ENCODE measurements at regions of chr5 and their contacts with region 1.

Region 1: DNA sequence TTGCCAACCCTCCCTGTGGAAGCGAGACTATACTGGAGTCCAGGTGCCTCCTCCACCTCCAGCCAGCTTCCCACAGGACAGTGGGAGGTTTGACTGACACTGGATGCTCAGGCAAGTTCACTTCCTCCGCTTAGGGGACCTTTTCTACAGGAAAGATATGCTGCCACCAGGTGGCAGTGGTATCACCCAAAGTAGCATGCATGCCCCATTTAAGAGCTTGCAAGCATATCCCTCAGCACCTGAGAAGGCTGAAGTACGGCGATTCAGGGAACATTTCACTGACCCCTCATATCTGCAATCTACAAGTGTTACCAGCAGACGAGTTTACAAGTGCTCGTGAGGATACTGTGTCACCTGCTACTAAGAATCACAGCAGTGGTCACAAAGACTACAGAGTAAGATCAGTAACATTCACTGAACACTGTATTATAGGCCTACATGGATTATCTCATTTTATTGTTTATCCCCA is 75.5 kb downstream of the KLHL3 start:
- DNase-seq: peak; percentile 82
- H3K4me3 Mint-ChIP-seq: no peak overlapping the region
- H3K27ac Mint-ChIP-seq: no peak overlapping the region
- H3K4me1 Mint-ChIP-seq: peaks cover 8% of the 10 kb centered on the region
- H3K27me3 Mint-ChIP-seq: no peaks in the 10 kb centered on the region

Region 2: DNA sequence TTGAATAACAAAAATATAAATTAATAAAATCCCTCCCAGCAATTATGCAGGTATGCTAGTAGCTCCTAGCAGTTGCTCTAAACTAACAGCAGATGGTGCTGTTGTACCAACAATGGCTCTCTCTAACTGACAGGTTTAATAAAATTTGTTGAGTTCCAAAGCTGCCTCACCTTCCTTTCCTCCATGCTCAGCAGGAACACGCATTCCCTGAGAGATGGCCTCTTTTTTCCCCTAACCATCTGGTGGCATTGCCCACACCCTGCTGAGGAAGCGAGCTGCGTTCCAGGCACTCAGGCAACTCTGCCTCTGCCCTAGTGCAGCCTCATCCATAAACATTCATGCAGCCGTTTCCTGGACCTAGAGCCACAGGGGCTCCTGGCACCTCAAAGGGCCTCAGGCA is 30.7 kb before region 1 on chr5:
- CTCF ChIA-PET with region 1: interaction called, 36 read pairs
- POLR2A ChIA-PET with region 1: no interaction called
- intact Hi-C with region 1: no loop called
- DNase-seq: no peak
- H3K4me3 Mint-ChIP-seq: no peak overlapping the region
- H3K27ac Mint-ChIP-seq: no peak overlapping the region
- H3K4me1 Mint-ChIP-seq: no peaks in the 10 kb centered on the region
- H3K27me3 Mint-ChIP-seq: no peaks in the 10 kb centered on the region

Region 3: DNA sequence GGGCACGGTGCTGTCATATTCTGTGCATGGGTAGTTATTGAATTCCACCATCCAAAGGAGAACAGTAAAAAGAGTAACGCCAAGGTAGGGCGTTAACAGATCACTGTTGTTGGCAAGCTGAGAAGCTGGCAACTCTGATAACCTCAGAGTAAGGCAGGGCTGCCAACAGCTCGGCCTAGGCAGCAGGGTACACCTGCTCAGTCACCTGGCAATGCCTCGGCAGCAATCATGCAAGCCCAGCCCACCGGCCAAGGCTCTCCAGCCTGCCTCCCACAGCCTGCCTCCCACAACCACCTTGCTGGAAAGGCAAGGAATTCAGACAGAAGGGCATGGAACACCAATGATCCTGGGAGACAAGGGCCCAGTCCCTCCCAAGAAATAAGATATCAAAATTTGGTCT is 11.6 kb after region 1 on chr5:
- CTCF ChIA-PET with region 1: interaction called, 47 read pairs
- POLR2A ChIA-PET with region 1: interaction called, 3 read pairs
- intact Hi-C with region 1: no loop called
- DNase-seq: no peak
- H3K4me3 Mint-ChIP-seq: no peak overlapping the region
- H3K27ac Mint-ChIP-seq: no peak overlapping the region
- H3K4me1 Mint-ChIP-seq: no peaks in the 10 kb centered on the region
- H3K27me3 Mint-ChIP-seq: no peaks in the 10 kb centered on the region

Region 4: GRCh38 chr5:137714946-137715345 is 54.6 kb after region 1 on chr5:
- CTCF ChIA-PET with region 1: interaction called, 13 read pairs
- POLR2A ChIA-PET with region 1: no interaction called
- intact Hi-C with region 1: no loop called
- DNase-seq: no peak
- H3K4me3 Mint-ChIP-seq: no peak overlapping the region
- H3K27ac Mint-ChIP-seq: no peak overlapping the region
- H3K4me1 Mint-ChIP-seq: no peaks in the 10 kb centered on the region
- H3K27me3 Mint-ChIP-seq: no peaks in the 10 kb centered on the region

Region 5: DNA sequence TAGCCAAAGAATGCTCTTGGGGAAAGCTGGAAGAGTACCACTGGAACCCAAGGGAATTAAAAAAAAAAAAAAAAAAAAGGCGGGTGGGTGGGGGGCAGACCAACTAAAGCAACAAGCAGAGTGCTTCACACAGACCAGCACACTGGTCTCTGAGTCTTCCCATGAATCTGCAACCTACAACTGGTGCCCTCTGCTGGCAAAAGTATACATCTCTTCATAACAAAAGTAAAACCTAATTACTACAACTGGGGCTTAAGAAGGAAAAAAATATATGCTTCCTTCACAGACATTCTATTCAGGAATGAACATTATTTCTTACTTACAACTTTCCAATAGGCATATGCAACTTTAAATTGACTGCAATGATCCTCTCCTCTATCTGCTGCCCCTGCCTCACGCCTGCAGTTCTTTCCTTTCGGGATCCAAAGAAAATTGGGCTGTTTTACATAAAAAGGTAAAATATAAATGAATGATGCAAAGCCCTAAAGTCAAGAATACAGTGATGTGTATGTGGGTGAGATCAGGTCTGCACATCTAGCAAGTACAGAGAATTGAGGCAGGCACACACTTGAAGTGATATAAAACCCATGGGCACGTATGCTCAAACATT is 82.8 kb after region 1 on chr5:
- CTCF ChIA-PET with region 1: interaction called, 369 read pairs
- POLR2A ChIA-PET with region 1: interaction called, 7 read pairs
- intact Hi-C with region 1: loop called (anchors 1 kb)
- DNase-seq: peak; percentile 57
- H3K4me3 Mint-ChIP-seq: no peak overlapping the region
- H3K27ac Mint-ChIP-seq: no peak overlapping the region
- H3K4me1 Mint-ChIP-seq: peaks cover 7% of the 10 kb centered on the region
- H3K27me3 Mint-ChIP-seq: no peaks in the 10 kb centered on the region